ENCODE measurements at regions of chr5 and their contacts with region 1.

Region 1: GRCh38 chr5:40798012-40798855 is at the start of gene PRKAA1:
- DNase-seq: peak; percentile 94
- ATAC-seq: peak; percentile 95
- total RNA-seq, gene PRKAA1: 33.6 TPM

Region 2: DNA sequence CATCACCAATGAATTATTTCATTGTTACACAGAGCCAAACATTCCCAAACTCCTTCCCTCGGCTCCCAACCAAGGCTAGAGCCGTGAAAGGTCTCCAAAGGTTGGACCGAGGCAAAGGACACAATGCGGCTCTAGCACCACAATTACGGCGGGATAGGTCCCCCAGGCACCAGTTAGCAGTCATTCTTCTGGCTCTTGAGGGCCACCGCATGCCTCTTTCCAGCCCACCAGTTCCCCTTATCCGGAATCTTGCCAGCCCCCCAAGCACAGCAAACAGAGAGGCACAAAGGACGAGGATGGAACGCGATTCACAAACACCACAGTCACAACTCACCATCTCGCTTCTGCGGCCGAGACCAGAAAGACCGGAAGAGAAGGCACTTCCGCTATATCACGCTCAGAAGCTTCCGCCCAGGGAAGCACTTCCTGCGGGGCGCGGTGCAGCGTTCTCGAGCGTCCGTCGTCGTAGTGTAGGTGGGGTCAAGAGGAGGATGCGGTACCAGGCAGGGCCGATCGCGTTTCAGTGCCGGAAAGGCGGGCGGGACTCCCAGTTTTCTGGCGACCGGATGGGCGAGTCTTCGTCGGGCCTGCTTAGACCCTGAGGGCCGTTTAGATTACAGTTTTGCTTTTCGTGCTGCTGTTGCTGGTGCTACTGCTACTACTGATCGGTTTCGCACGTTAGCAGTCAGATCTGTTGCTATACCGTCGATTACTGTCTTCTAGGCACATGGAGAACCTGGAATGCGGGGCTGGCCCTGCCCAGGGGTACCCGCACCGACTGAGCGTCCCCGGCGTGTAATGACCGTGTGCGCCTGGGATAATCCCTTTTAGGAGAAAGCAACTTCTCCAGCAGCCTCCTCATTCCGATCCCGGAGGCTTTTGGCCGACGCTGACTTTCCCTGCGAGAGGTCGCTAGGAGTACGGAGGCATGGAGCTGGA is 36.9 kb after region 1 on chr5 and contains the start of gene RPL37:
- intact Hi-C with region 1: loop called (anchors 1 kb)
- DNase-seq: peak; percentile 97
- ATAC-seq: peak; percentile 100
- total RNA-seq, gene RPL37: 693 TPM

Region 3: GRCh38 chr5:41083306-41083705 is 285.1 kb after region 1 on chr5:
- intact Hi-C with region 1: no loop called
- DNase-seq: no peak
- ATAC-seq: no peak

Region 4: DNA sequence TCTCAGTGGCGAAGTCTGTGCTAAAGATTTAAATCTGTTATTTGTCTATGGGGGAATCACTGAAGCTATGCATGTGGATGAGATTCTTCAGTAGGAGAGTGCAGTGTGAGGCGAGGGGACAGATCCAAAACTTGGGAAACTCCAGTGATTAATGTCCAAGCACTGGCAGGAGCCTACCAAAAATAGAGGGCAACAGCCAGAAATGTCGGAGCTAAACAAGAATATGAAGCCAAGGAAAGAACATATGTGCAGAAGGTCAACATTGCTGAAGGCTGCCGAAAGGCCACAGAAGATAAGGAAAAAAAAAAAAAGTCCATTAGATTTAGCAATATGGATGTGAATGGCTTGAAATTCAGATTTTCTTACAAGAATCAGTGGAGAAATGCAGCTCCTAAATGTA is 353.3 kb after region 1 on chr5:
- intact Hi-C with region 1: no loop called
- DNase-seq: no peak
- ATAC-seq: no peak

Measured in Right ventricle myocardium inferior (tissue), 1 donor.